ENCODE measurements at regions of chr19 and their contacts with region 1.

Region 1: DNA sequence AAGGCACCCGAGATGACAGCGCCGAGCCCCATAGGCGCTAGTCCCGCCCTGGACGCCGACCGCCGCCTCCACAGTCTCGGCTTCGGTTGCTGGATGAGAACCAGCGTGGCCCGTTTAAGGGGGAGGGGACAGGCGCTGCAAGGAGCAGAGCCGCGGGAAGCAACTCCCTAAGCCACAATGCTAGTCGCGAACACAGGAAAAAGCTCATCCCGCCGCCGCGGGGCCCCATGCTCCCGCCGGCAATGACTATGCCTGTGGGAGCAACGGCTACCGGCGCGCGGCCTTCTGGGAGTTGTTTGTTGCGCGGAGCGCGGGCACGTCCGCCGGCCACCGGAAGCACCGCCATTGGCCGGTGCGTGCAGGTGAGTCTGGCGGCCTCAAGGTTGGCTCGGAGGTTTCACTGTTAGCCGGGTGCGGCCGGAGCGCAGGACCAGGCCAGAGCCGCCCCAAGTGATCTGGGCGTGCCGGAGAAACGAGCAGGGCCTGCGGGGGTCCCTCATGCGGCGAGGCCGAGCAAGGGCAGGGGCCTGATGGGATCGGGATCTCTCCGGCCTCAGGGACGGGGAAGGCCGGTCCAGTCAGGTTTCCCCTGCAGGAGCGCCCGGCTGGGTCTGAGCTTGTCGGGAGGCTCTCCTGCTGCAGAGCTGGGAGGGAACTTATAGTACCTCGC is at the start of gene ZNF544:
- DNase-seq: peak; percentile 72
- ATAC-seq: peak; percentile 82
- H3K4me3 ChIP-seq: peak within 1 kb of the TSS; percentile 19 to 91 (median 87)
- H3K4me3 Mint-ChIP-seq: peak within 1 kb of the TSS; percentile 97
- H3K27ac ChIP-seq: peak within 1 kb of the TSS; percentile 19 to 73
- H3K27ac Mint-ChIP-seq: peak within 1 kb of the TSS; percentile 91
- H3K4me1 ChIP-seq: peaks cover 11 to 24% of the 10 kb centered on the region in 2 donors
- H3K4me1 Mint-ChIP-seq: peaks cover 29% of the 10 kb centered on the region
- H3K27me3 ChIP-seq: no peaks in the 10 kb centered on the region
- H3K27me3 Mint-ChIP-seq: no peaks in the 10 kb centered on the region
- CTCF ChIP-seq: peak; percentile 22
- total RNA-seq, gene ZNF544: 65.7 and 75.2 TPM in 2 replicates

Region 2: GRCh38 chr19:57191141-57192076 is 1037.3 kb before region 1 on chr19 and contains the start of gene ZNF264:
- CTCF ChIA-PET with region 1: no interaction called
- POLR2A ChIA-PET with region 1: interaction called, 11 read pairs
- intact Hi-C with region 1: no loop called
- DNase-seq: peak; percentile 92
- ATAC-seq: peak; percentile 98
- H3K4me3 ChIP-seq: peak within 1 kb of the TSS; percentile 69 to 94 (median 81)
- H3K4me3 Mint-ChIP-seq: peak within 1 kb of the TSS; percentile 92
- H3K27ac ChIP-seq: peak within 1 kb of the TSS; percentile 73 to 81
- H3K27ac Mint-ChIP-seq: peak within 1 kb of the TSS; percentile 96
- H3K4me1 ChIP-seq: peaks cover 20 to 21% of the 10 kb centered on the region in 2 donors
- H3K4me1 Mint-ChIP-seq: peaks cover 25% of the 10 kb centered on the region
- H3K27me3 ChIP-seq: peaks cover 0 to 11% (median 1%) of the 10 kb centered on the region in 4 experiments
- H3K27me3 Mint-ChIP-seq: peaks cover 9% of the 10 kb centered on the region
- CTCF ChIP-seq: no peak
- total RNA-seq, gene ZNF264: 72.4 and 82.6 TPM in 2 replicates

Region 3: GRCh38 chr19:58182989-58183816 is 45.5 kb before region 1 on chr19 and contains the start of gene ZNF274:
- CTCF ChIA-PET with region 1: no interaction called
- POLR2A ChIA-PET with region 1: no interaction called
- intact Hi-C with region 1: loop called (anchors 1 kb)
- DNase-seq: peak; percentile 97
- ATAC-seq: peak; percentile 85
- H3K4me3 ChIP-seq: peak within 1 kb of the TSS; percentile 78 to 100 (median 88)
- H3K4me3 Mint-ChIP-seq: peak within 1 kb of the TSS; percentile 96
- H3K27ac ChIP-seq: peak within 1 kb of the TSS; percentile 99 to 100
- H3K27ac Mint-ChIP-seq: peak within 1 kb of the TSS; percentile 100
- H3K4me1 ChIP-seq: peaks cover 12 to 20% of the 10 kb centered on the region in 2 donors
- H3K4me1 Mint-ChIP-seq: peaks cover 26% of the 10 kb centered on the region
- H3K27me3 ChIP-seq: no peaks in the 10 kb centered on the region
- H3K27me3 Mint-ChIP-seq: no peaks in the 10 kb centered on the region
- CTCF ChIP-seq: no peak
- total RNA-seq, gene ZNF274: 83.7 and 85.4 TPM in 2 replicates

Measured in B cell (primary cell).